ENCODE measurements at regions of chr15 and their contacts with region 1.

Region 1: DNA sequence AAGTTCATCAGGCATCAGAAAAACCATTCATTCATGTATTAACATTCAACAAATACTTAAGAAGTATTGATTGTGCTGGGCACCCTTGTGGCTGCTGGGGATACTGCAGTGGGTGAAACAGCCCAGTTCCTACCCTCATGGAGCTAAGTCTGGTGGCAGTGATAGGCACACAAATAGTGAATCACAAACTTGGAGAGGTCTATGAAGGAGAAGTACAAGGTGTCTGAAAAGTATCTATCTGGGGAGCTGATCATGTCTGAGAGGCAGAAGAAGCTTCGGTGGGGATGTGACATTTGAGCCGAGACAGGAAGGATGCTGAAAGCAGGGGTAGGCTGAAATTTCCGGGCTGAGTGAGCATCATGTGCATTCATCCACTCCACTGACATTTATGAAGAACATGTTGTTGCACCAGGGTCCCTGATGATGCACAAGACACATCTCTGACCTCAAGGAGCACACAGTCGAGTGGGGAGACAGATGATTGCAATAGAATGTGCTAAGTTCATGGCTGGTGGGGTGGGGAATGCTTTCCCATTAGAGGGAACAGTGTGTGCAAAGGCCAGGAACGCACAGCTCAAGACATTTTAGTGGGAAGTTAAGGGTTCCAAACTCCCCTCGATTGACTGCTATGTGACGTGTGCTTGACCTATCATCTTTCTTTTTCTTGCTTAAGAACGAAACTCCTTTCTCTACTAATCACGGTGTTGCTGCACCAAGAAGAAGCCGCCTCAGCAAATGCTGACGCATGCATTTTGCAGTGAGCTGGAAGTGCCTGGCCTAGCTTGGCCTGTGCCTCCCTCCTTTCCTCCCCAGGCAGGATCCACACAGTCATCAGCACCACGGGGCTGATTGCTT is 309.1 kb upstream of the ICE2 start:
- DNase-seq: no peak
- H3K4me3 ChIP-seq: no peak overlapping the region
- CTCF ChIP-seq: peak; percentile 30

Region 2: DNA sequence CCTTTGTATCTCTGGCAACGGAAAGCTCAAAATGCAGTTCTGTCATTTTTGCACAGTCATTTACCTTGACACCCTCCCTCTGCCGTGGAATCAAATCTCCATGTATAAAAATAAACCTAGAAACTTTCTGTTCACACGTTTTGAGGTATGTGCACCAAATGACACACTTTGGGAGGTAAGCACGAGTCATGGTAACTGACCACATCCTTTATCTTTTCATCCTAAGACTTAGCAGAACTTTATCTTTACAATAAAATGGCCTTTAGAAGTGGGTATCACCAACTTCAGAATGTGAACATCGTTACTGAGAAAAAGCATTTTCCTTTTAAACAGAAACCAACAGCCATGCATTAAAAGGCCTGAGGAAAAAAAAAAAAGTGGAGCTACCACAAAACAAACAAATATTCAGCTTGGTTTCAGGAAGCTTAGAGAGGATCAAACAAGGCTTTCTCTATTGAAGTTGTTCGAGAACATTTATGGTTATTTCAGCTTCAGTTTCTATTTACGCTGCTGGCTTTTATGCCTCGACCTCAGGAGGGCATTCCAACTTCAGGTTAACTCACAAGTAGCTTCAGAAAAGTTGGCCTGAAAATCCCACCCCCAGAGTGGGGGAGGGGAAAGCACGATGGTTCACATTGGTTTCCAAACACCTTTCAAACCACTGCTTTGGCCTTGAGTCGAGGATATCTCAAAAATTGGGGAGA is 138.1 kb before region 1 on chr15:
- CTCF ChIA-PET with region 1: no interaction called
- POLR2A ChIA-PET with region 1: no interaction called
- DNase-seq: no peak
- H3K4me3 ChIP-seq: no peak overlapping the region
- CTCF ChIP-seq: no peak

Region 3: DNA sequence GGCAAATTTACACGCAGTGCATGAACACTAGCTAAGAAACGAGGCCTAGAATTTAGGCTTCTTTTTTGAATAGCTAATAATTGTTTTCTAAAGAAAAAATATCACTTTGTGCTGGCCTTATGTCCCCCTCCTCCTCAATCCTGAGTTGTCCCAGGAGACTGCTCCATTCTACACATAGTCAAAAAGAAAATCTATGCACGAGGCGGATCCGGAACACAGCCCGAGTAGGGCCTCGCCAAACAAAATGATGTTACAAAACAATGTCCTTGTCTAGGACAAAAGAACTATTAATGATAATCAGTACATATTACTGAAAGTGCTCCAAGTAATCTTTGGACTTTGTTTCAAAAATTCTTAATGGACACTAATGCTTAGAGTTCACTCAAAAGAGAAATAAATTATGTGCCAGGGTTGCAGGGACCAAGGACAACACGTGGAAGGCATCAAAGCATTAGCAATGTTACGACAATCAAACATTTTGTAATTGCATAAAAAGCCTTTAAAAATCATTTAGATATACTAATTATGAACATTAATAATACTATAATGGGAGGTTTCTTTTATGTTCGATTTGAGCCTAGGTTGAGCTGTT is 102.6 kb before region 1 on chr15:
- CTCF ChIA-PET with region 1: no interaction called
- POLR2A ChIA-PET with region 1: no interaction called
- DNase-seq: no peak
- H3K4me3 ChIP-seq: no peak overlapping the region
- CTCF ChIP-seq: no peak

Region 4: GRCh38 chr15:60798821-60799220 is 10.8 kb after region 1 on chr15:
- CTCF ChIA-PET with region 1: interaction called, 21 read pairs
- POLR2A ChIA-PET with region 1: no interaction called
- DNase-seq: peak; percentile 42
- H3K4me3 ChIP-seq: no peak overlapping the region
- CTCF ChIP-seq: no peak